Heart right ventricle (tissue), 16 donors: ENCODE measurements at regions of chr22 and their contacts with region 1.

Region 1: GRCh38 chr22:41935015-41935351 is 8.4 kb upstream of the TNFRSF13C start:
- DNase-seq: peak; percentile 59 to 65
- ATAC-seq: peak; percentile 48 to 90 (median 74)
- H3K4me3 ChIP-seq: no peak overlapping the region
- H3K27ac ChIP-seq: peak overlapping the region; percentile 20 to 76 (median 60)
- H3K4me1 ChIP-seq: peaks cover 0 to 26% (median 7%) of the 10 kb centered on the region in 9 donors
- H3K27me3 ChIP-seq: no peaks in the 10 kb centered on the region
- CTCF ChIP-seq: no peak

Region 2: GRCh38 chr22:41822317-41823060 is 112.5 kb before region 1 on chr22:
- intact Hi-C with region 1: loop called in 9 of 10 experiments (anchors 1 to 5 kb)
- DNase-seq: no peak
- ATAC-seq: peak in 1 of 8 donors; percentile 24
- H3K4me3 ChIP-seq: no peak overlapping the region
- H3K27ac ChIP-seq: no peak overlapping the region
- H3K4me1 ChIP-seq: peaks cover 12 to 28% (median 23%) of the 10 kb centered on the region in 9 donors
- H3K27me3 ChIP-seq: no peaks in the 10 kb centered on the region
- CTCF ChIP-seq: peak in 8 of 9 donors; percentile 24 to 69 (median 56)

Region 3: DNA sequence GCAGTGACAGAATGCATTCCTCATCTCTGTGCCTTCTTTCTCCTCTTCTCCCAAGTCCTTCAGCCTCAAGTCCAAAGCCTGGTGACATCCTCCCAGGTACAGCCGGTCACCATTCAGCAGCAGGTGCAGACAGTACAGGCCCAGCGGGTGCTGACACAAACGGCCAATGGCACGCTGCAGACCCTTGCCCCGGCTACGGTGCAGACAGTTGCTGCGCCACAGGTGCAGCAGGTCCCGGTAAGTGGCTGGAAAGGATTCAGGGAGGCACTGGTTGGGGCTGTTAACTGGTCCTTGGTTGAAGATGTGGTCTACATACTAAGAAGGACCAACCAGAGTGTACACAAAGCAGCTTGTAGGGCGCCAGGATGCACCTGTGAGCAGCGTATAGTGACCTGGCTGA is 66.4 kb before region 1 on chr22:
- intact Hi-C with region 1: loop called in 1 of 10 experiments (anchors 2 kb)
- DNase-seq: no peak
- ATAC-seq: no peak
- H3K4me3 ChIP-seq: no peak overlapping the region
- H3K27ac ChIP-seq: no peak overlapping the region
- H3K4me1 ChIP-seq: peaks cover 0 to 17% (median 2%) of the 10 kb centered on the region in 9 donors
- H3K27me3 ChIP-seq: no peaks in the 10 kb centered on the region
- CTCF ChIP-seq: no peak